H1 (cell line): ENCODE measurements at regions of chr11 and their contacts with region 1.

Region 1: GRCh38 chr11:91248199-91248807 is 976.3 kb upstream of the FAT3 start:
- DNase-seq: no peak
- H3K4me3 ChIP-seq: no peak overlapping the region
- H3K27ac ChIP-seq: no peak overlapping the region
- H3K4me1 ChIP-seq: peaks cover 0 to 2% (median 0%) of the 10 kb centered on the region in 4 experiments; a peak in 1 of 7 replicates
- H3K27me3 ChIP-seq: no peaks in the 10 kb centered on the region
- CTCF ChIP-seq: peak in 2 of 3 experiments; percentile 35 to 62; a peak in 2 of 4 replicates
- EP300 ChIP-seq: no peak
- POLR2A ChIP-seq: no peak
- RAD21 ChIP-seq: peak; percentile 60 to 63

Region 2: GRCh38 chr11:91231201-91231600 is 17.1 kb before region 1 on chr11:
- CTCF ChIA-PET with region 1: interaction called, 12 read pairs
- POLR2A ChIA-PET with region 1: no interaction called
- DNase-seq: no peak
- H3K4me3 ChIP-seq: no peak overlapping the region
- H3K27ac ChIP-seq: no peak overlapping the region
- H3K4me1 ChIP-seq: no peaks in the 10 kb centered on the region
- H3K27me3 ChIP-seq: no peaks in the 10 kb centered on the region
- CTCF ChIP-seq: no peak
- EP300 ChIP-seq: no peak
- POLR2A ChIP-seq: no peak
- RAD21 ChIP-seq: no peak